Common myeloid progenitor, CD34-positive (primary cell): ENCODE measurements at regions of chr13 and their contacts with region 1.

Region 1: DNA sequence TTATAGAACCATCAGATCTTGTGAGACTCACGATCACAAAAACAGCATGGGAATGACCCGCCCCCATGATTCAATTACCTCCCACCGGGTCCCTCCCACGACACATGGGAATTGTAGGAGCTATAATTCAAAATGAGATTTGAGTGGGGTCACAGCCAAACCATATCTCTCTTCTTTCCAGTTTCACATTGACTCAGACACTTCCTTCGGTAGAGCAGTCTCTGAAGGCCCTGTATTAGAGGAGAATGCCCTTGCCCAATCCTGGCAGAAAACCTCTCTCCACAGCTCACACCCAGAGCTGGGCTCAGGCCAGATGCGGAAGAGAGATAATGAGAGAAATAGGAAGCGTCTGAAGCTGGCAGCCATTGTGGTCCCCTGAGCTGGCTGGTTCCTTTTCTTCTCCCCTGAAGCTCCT is 72.4 kb upstream of the CLDN10 start:
- DNase-seq: peak; percentile 93 to 99 (median 98)
- H3K4me3 ChIP-seq: peak overlapping the region in 5 of 7 experiments; percentile 4 to 55 (median 50)
- H3K27ac ChIP-seq: peak overlapping the region; percentile 42 to 58
- H3K4me1 ChIP-seq: peaks cover 7 to 40% (median 26%) of the 10 kb centered on the region in 4 experiments
- H3K27me3 ChIP-seq: no peaks in the 10 kb centered on the region

Region 2: DNA sequence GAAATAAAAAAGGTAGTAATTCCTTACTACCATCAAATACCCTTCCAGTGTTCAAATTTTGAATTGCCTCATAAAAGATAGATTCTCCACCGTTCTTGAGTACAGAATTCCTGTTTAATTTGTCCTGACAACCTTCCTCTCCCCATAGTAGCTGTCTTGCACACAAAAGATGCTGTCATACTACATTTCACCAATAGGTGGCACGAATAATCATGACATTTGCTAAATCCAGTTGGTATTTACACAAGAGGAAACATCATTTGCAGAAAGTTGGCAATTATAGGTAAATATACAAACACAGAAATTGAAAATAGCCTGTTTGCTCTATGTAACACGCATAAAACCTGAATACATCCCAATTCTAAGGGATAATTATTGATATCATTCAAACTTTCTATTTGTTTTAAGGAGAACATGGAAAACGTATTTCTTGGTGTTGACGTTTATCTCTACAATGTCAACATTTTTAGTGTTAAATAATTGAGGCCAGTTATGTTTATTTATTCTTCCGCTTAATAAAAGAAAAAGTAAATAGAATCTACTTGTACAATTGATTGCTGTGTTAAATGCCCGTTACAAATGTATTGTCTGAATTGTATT is 14.0 kb after region 1 on chr13:
- CTCF ChIA-PET with region 1: interaction called, 23 read pairs
- POLR2A ChIA-PET with region 1: interaction called, 3 read pairs
- DNase-seq: peak; percentile 71 to 84 (median 78)
- H3K4me3 ChIP-seq: no peak overlapping the region
- H3K27ac ChIP-seq: no peak overlapping the region
- H3K4me1 ChIP-seq: peaks cover 0 to 16% (median 13%) of the 10 kb centered on the region in 4 experiments
- H3K27me3 ChIP-seq: no peaks in the 10 kb centered on the region

Region 3: GRCh38 chr13:96053011-96053703 is 573.0 kb after region 1 on chr13 and contains the start of gene UGGT2:
- CTCF ChIA-PET with region 1: no interaction called
- POLR2A ChIA-PET with region 1: no interaction called
- DNase-seq: peak; percentile 39 to 65 (median 59)
- H3K4me3 ChIP-seq: peak within 1 kb of the TSS; percentile 64 to 89 (median 87)
- H3K27ac ChIP-seq: no peak within 1 kb of the TSS
- H3K4me1 ChIP-seq: peaks cover 0 to 13% (median 4%) of the 10 kb centered on the region in 4 experiments
- H3K27me3 ChIP-seq: peaks cover 0 to 1% (median 0%) of the 10 kb centered on the region in 5 experiments